HAP-1 (cell line): ENCODE measurements at regions of chr20 and their contacts with region 1.

Region 1: GRCh38 chr20:20664795-20665589 is 47.5 kb downstream of the RALGAPA2 start:
- DNase-seq: peak; percentile 34 to 51
- H3K4me3 ChIP-seq: no peak overlapping the region
- H3K4me1 ChIP-seq: peaks cover 18% of the 10 kb centered on the region
- H3K27me3 ChIP-seq: no peaks in the 10 kb centered on the region

Region 2: GRCh38 chr20:20824924-20825584 is 160.1 kb after region 1 on chr20:
- in situ Hi-C with region 1: loop called (anchors 5 kb)
- DNase-seq: peak; percentile 22 to 80
- H3K4me3 ChIP-seq: no peak overlapping the region
- H3K4me1 ChIP-seq: peaks cover 3% of the 10 kb centered on the region; the same call in 1 of the 2 replicates
- H3K27me3 ChIP-seq: no peaks in the 10 kb centered on the region

Region 3: DNA sequence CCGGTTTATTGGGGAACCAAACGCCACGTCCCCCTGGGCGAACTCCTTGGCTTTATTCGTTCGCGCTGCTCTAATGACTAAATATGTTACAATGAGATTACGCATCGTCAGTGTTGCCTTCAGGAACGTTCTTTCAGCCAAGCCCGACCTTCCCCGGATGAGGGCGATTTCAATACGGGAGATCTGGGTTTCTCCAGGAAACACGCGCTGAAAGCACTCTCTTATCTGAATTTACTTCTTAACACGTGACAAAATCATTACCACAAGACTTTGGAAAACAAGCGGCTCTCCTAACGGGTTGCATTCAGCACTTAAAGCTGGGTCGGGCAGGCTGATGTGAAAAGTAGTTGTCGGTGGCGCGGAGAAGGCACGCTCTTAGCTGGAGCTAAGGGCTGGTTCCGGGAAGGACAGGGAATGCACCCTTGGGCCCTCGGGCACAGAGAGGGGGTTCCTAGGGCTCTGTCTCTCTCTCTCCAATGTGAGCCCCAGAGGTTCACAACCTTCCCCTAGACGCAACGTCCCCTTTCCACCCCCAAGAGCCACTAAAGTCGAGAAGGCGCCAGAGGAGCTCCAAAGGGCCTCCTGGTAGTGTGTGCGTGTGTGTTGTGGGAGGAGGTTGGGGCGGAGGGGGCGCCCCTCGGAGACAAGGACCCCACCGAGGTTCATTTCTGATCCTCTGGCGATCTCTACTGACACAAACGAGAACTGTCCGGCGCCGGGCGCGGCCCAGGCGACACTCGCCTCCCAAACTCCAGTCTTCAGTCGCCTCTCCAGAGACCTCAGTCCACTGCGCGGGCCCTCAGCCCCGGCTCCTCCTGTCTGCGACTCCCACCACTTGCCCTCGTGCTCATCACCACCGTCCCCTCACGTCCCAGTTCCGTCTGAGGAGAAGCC is 856.0 kb after region 1 on chr20:
- in situ Hi-C with region 1: no loop called
- DNase-seq: no peak
- H3K4me3 ChIP-seq: peak overlapping the region; percentile 10; the same call in 1 of the 2 replicates
- H3K4me1 ChIP-seq: peaks cover 5% of the 10 kb centered on the region; the same call in 1 of the 2 replicates
- H3K27me3 ChIP-seq: peaks cover 54% of the 10 kb centered on the region